ENCODE measurements at regions of chr14 and their contacts with region 1.

Region 1: GRCh38 chr14:95683793-95684192 is 2.4 kb upstream of the TCL1B start:
- DNase-seq: peak; percentile 11
- ATAC-seq: peak; percentile 75
- H3K4me3 ChIP-seq: no peak overlapping the region
- H3K27ac ChIP-seq: no peak overlapping the region
- H3K4me1 ChIP-seq: no peaks in the 10 kb centered on the region
- H3K27me3 ChIP-seq: 0 out of 5 replicates have a peak, but pooled peaks cover 0 to 2% of the 10 kb centered on the region in 2 experiments
- CTCF ChIP-seq: peak; percentile 63
- EP300 ChIP-seq: no peak
- POLR2A ChIP-seq: no peak
- RAD21 ChIP-seq: peak; percentile 34; the same call in 1 of the 2 replicates

Region 2: DNA sequence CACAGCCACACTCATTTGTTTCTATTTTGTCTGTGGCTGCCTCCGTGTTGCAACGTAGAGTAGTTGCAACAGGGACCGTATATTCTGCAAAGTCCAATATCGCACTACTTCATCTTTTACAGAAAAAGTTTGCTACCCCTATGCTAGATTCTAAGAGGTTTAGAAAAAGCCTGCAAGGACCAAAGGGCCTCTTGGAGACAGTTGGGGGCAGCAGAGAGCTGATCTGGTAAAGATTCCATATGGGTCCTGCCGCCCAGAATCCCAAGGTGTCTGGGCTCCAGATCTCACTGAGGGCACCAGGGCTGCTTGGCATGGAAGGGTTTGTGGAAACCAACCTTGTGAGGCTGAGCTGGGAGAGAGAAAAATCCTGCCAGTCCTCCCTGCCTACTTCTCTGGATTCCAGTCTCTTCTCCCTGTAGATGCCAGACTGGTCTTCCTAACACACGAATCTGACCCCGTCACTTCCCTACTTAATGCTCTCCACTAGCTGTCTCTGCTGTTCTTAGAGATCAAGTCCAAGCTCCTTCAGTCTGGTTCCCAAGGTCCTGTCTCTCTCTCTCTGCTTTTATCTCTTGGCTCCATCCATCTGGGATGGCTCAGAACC is 74.3 kb before region 1 on chr14:
- CTCF ChIA-PET with region 1: interaction called, 7 read pairs
- POLR2A ChIA-PET with region 1: no interaction called
- in situ Hi-C with region 1: no loop called
- intact Hi-C with region 1: loop called (anchors 1 kb)
- DNase-seq: peak; percentile 39
- ATAC-seq: peak; percentile 85
- H3K4me3 ChIP-seq: no peak overlapping the region
- H3K27ac ChIP-seq: no peak overlapping the region
- H3K4me1 ChIP-seq: no peaks in the 10 kb centered on the region
- H3K27me3 ChIP-seq: peaks cover 3 to 55% of the 10 kb centered on the region in 2 experiments; a peak in 4 of 5 replicates
- CTCF ChIP-seq: peak; percentile 61
- EP300 ChIP-seq: no peak
- POLR2A ChIP-seq: no peak
- RAD21 ChIP-seq: peak; percentile 63